ENCODE measurements at regions of chr2 and their contacts with region 1.

Region 1: DNA sequence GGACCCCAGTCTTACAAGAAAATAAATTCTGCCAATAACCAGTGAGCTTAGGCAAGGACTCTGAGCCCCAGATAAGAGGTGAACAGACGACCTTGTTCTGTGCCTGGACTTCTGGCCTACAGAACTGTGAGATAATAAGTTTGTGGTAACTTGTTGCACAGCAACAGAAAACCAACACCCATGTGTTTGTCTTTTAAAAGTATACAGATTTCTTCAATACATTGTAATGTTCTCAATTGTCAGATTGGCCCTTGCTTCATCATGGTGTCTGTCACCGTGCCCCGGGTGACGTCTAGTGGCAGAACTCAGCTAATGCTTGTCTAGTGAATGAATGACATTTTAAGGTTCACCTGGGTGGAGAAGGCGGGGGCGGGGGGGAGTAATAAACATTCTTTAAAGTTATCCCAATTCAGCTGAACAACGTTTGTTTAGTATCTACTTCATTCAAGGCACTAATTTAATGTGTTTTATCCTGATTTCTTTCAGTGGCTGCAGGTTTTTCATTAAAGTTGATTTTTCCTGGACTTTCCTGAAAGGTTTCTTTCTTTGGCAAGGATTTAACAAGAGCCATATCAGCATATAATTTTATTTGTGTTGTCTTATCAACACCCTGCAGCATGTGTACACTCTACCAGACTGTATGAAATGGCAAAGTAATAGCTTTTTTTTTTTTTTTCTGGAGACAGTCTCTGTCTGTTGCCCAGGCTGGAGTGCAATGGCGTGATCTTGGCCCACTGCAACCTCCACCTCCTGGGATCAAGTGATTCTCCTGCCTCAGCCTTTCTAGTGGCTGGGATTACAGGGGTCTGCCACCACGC is 123.8 kb upstream of the DLX2 start:
- DNase-seq: peak; percentile 81 to 88
- H3K4me3 ChIP-seq: no peak overlapping the region
- H3K27ac ChIP-seq: no peak overlapping the region
- H3K4me1 ChIP-seq: peaks cover 60% of the 10 kb centered on the region
- H3K27me3 ChIP-seq: no peaks in the 10 kb centered on the region
- CTCF ChIP-seq: peak; percentile 82

Region 2: GRCh38 chr2:171086352-171087290 is 1139.8 kb before region 1 on chr2:
- CTCF ChIA-PET with region 1: interaction called, 9 read pairs
- POLR2A ChIA-PET with region 1: no interaction called
- intact Hi-C with region 1: loop called (anchors 5 kb)
- DNase-seq: peak; percentile 52 to 59
- H3K4me3 ChIP-seq: no peak overlapping the region
- H3K27ac ChIP-seq: no peak overlapping the region
- H3K4me1 ChIP-seq: no peaks in the 10 kb centered on the region
- H3K27me3 ChIP-seq: no peaks in the 10 kb centered on the region
- CTCF ChIP-seq: peak; percentile 84

Region 3: DNA sequence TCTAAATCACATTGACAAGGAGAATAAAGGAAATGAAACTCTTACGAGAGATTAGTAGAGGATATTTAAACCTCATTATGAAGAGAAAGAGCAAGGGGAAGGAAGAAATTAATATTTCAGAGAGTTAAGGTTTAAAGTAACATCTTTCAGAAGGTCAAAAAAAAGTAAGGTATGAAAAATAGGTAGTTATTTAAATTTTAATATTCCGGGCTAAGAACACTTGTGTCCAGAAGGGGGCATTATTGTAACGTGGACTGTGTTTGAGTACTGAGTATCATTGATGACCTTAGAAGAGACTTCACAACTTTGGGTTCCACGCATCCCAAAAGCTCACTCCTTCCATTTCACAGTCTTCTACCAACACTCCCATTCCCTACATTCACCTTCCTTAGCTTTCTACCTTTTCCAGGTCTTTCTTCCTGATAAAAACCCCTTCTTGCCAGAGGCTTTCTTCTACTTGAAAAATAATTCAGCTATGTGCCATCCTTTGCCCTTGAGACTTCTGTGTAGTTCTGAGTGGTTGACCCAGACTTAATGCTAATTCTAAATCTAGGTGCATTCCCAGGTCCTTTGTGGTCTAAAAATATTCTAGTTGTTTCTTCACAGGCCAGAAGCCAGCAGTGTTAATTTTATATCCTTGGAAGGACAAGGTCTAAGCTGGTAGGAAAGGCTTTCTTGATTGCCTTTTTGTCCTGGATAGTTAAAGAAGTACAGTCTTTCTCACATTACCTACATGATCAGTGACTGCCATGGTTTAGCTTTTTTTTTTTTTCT is 522.7 kb before region 1 on chr2:
- CTCF ChIA-PET with region 1: no interaction called
- POLR2A ChIA-PET with region 1: interaction called, 3 read pairs
- intact Hi-C with region 1: loop called (anchors 5 kb)
- DNase-seq: peak; percentile 10 to 59
- H3K4me3 ChIP-seq: no peak overlapping the region
- H3K27ac ChIP-seq: peak overlapping the region; percentile 18; the same call in 1 of the 2 replicates
- H3K4me1 ChIP-seq: no peaks in the 10 kb centered on the region
- H3K27me3 ChIP-seq: no peaks in the 10 kb centered on the region
- CTCF ChIP-seq: peak; percentile 85

Region 4: GRCh38 chr2:172102391-172103278 is 123.8 kb before region 1 on chr2 and contains the start of gene DLX2:
- CTCF ChIA-PET with region 1: interaction called, 11 read pairs
- POLR2A ChIA-PET with region 1: no interaction called
- intact Hi-C with region 1: loop called (anchors 2 kb)
- DNase-seq: peak; percentile 93
- H3K4me3 ChIP-seq: peak within 1 kb of the TSS; percentile 73
- H3K27ac ChIP-seq: no peak within 1 kb of the TSS
- H3K4me1 ChIP-seq: peaks cover 34% of the 10 kb centered on the region
- H3K27me3 ChIP-seq: no peaks in the 10 kb centered on the region
- CTCF ChIP-seq: no peak
- total RNA-seq, gene DLX2: 0.65 and 0.76 TPM in 2 replicates

Region 5: GRCh38 chr2:172293956-172294355 is 67.5 kb after region 1 on chr2:
- CTCF ChIA-PET with region 1: no interaction called
- POLR2A ChIA-PET with region 1: no interaction called
- intact Hi-C with region 1: no loop called
- DNase-seq: peak in 1 of 2 experiments; percentile 60
- H3K4me3 ChIP-seq: no peak overlapping the region
- H3K27ac ChIP-seq: no peak overlapping the region
- H3K4me1 ChIP-seq: peaks cover 15% of the 10 kb centered on the region
- H3K27me3 ChIP-seq: no peaks in the 10 kb centered on the region
- CTCF ChIP-seq: no peak

Region 6: GRCh38 chr2:172427256-172427989 is 201.0 kb after region 1 on chr2 and contains the start of gene ITGA6:
- CTCF ChIA-PET with region 1: interaction called, 6 read pairs
- POLR2A ChIA-PET with region 1: no interaction called
- intact Hi-C with region 1: loop called (anchors 1 kb)
- DNase-seq: peak; percentile 87 to 96
- H3K4me3 ChIP-seq: peak within 1 kb of the TSS; percentile 57
- H3K27ac ChIP-seq: peak within 1 kb of the TSS; percentile 52
- H3K4me1 ChIP-seq: peaks cover 45% of the 10 kb centered on the region
- H3K27me3 ChIP-seq: no peaks in the 10 kb centered on the region
- CTCF ChIP-seq: peak; percentile 43; the same call in 1 of the 2 replicates
- total RNA-seq, gene ITGA6: 180 and 213 TPM in 2 replicates

Region 7: DNA sequence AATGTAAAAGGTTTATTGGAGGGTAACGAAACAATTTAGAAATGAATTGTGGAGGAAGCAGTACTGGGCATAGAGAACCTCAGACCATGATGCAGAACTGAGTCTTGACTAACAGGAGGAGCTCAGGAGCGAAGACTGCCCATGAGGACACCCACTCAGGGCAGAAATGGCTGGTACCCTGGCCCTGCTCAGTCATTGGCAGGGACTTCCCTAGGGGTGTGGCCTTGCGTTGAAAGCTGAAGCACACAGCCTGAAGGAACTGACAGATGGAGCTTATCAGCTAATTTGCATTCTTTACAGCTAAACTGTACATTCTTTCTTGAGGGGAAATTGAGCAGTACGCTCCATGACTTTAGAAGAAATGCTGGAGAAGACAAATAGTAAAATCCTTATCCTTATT is 386.6 kb after region 1 on chr2:
- CTCF ChIA-PET with region 1: interaction called, 13 read pairs
- POLR2A ChIA-PET with region 1: no interaction called
- intact Hi-C with region 1: no loop called
- DNase-seq: no peak
- H3K4me3 ChIP-seq: no peak overlapping the region
- H3K27ac ChIP-seq: no peak overlapping the region
- H3K4me1 ChIP-seq: no peaks in the 10 kb centered on the region
- H3K27me3 ChIP-seq: no peaks in the 10 kb centered on the region
- CTCF ChIP-seq: no peak